ENCODE measurements at regions of chr5 and their contacts with region 1.

Region 1: GRCh38 chr5:137778772-137779564 is 24.8 kb upstream of the HNRNPA0 start:
- DNase-seq: no peak
- H3K4me3 Mint-ChIP-seq: no peak overlapping the region
- H3K27ac Mint-ChIP-seq: no peak overlapping the region
- H3K4me1 Mint-ChIP-seq: no peaks in the 10 kb centered on the region
- H3K27me3 Mint-ChIP-seq: peaks cover 8% of the 10 kb centered on the region

Region 2: GRCh38 chr5:138067945-138068344 is 289.0 kb after region 1 on chr5:
- intact Hi-C with region 1: loop called (anchors 1 kb)
- DNase-seq: no peak
- H3K4me3 Mint-ChIP-seq: no peak overlapping the region
- H3K27ac Mint-ChIP-seq: no peak overlapping the region
- H3K4me1 Mint-ChIP-seq: peaks cover 6% of the 10 kb centered on the region
- H3K27me3 Mint-ChIP-seq: no peaks in the 10 kb centered on the region

Region 3: GRCh38 chr5:138128334-138128733 is 349.4 kb after region 1 on chr5:
- intact Hi-C with region 1: loop called (anchors 2 kb)
- DNase-seq: no peak
- H3K4me3 Mint-ChIP-seq: no peak overlapping the region
- H3K27ac Mint-ChIP-seq: no peak overlapping the region
- H3K4me1 Mint-ChIP-seq: no peaks in the 10 kb centered on the region
- H3K27me3 Mint-ChIP-seq: peaks cover 12% of the 10 kb centered on the region